ENCODE measurements at regions of chr21 and their contacts with region 1.

Region 1: GRCh38 chr21:24514081-24514733 is 1093.1 kb downstream of the MRPL39 start:
- DNase-seq: peak; percentile 27
- ATAC-seq: no peak; the same call in 1 of the 2 replicates
- H3K4me3 ChIP-seq: no peak overlapping the region
- H3K27ac ChIP-seq: no peak overlapping the region
- H3K4me1 ChIP-seq: no peaks in the 10 kb centered on the region
- H3K27me3 ChIP-seq: no peaks in the 10 kb centered on the region
- CTCF ChIP-seq: peak; percentile 73
- POLR2A ChIP-seq: no peak
- RAD21 ChIP-seq: peak; percentile 71

Region 2: GRCh38 chr21:23853796-23854379 is 660.3 kb before region 1 on chr21:
- CTCF ChIA-PET with region 1: no interaction called
- POLR2A ChIA-PET with region 1: no interaction called
- dilution Hi-C with region 1: no loop called
- in situ Hi-C with region 1: loop called (anchors 25 kb)
- intact Hi-C with region 1: loop called (anchors 2 kb)
- DNase-seq: peak; percentile 31
- ATAC-seq: peak; percentile 66
- H3K4me3 ChIP-seq: no peak overlapping the region
- H3K27ac ChIP-seq: no peak overlapping the region
- H3K4me1 ChIP-seq: no peaks in the 10 kb centered on the region
- H3K27me3 ChIP-seq: no peaks in the 10 kb centered on the region
- CTCF ChIP-seq: peak; percentile 51
- POLR2A ChIP-seq: no peak
- RAD21 ChIP-seq: peak; percentile 50

Region 3: DNA sequence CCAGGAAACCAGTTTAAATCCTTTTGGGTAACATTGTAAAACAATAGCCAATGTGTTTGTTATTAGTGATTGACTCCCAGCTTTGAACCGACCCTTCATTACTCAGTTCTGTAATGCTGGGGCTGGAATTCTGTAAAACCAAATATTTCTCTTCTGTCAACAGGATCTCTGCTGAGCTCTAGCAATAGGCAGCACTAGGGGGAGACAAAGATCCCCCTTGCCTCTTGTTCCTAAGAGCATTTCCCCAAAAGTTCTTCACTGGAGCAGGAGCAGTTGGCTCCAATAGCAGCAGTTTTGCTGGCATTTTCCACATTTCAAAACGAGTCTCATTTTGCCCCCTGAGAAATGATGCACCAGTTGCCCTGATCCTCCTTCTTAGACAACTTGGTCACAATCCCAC is 578.0 kb before region 1 on chr21:
- CTCF ChIA-PET with region 1: no interaction called
- POLR2A ChIA-PET with region 1: no interaction called
- dilution Hi-C with region 1: no loop called
- in situ Hi-C with region 1: no loop called
- intact Hi-C with region 1: loop called (anchors 1 kb)
- DNase-seq: peak; percentile 48
- ATAC-seq: peak; percentile 57
- H3K4me3 ChIP-seq: no peak overlapping the region
- H3K27ac ChIP-seq: no peak overlapping the region
- H3K4me1 ChIP-seq: no peaks in the 10 kb centered on the region
- H3K27me3 ChIP-seq: no peaks in the 10 kb centered on the region
- CTCF ChIP-seq: peak; percentile 61
- POLR2A ChIP-seq: no peak
- RAD21 ChIP-seq: peak; percentile 59

Region 4: DNA sequence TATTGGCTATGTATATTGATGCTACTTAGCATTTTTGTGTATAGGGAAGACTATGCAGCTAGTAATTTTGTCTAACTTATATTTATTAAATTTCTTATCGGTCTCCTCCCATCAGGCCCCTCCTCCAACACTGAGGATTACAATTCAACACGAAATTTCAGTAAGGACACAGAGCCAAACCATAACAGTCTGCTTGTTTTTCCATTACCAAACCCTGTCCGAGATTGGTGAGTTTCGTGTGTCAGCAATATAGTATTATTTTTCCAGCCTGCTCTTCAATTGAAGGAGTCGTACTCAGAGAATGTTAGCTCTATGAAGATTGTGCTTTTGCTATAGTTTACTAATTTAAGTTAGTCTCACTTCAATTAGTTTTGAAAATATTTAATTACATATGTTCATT is 402.2 kb before region 1 on chr21:
- CTCF ChIA-PET with region 1: no interaction called
- POLR2A ChIA-PET with region 1: no interaction called
- dilution Hi-C with region 1: no loop called
- in situ Hi-C with region 1: loop called (anchors 10 kb)
- intact Hi-C with region 1: loop called (anchors 2 kb)
- DNase-seq: peak; percentile 48
- ATAC-seq: peak; percentile 64
- H3K4me3 ChIP-seq: no peak overlapping the region
- H3K27ac ChIP-seq: no peak overlapping the region
- H3K4me1 ChIP-seq: 0 out of 2 replicates have a peak, but pooled peaks cover 2% of the 10 kb centered on the region
- H3K27me3 ChIP-seq: no peaks in the 10 kb centered on the region
- CTCF ChIP-seq: no peak
- POLR2A ChIP-seq: no peak
- RAD21 ChIP-seq: no peak

Region 5: DNA sequence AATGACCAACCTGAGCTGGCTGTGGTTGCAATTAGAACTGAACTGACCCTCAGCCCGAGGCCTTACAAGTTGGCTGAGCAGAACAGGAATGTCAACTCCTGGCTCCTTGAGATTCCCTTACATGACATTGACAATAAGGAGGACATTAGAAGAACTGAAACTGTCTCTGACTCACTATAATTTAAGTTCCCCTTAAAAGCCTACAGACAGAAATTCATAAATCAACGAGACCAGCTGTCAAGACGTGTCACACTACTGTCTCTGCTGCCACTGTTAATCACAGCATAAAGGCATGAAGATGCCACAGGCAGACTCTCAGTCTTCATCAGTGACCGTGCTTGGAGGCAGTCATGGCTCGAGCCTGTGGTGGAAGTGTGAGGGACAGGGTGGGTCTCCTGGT is 1389.4 kb after region 1 on chr21:
- CTCF ChIA-PET with region 1: no interaction called
- POLR2A ChIA-PET with region 1: no interaction called
- dilution Hi-C with region 1: no loop called
- in situ Hi-C with region 1: no loop called
- intact Hi-C with region 1: no loop called
- DNase-seq: no peak
- ATAC-seq: no peak
- H3K4me3 ChIP-seq: no peak overlapping the region
- H3K27ac ChIP-seq: no peak overlapping the region
- H3K4me1 ChIP-seq: peaks cover 3% of the 10 kb centered on the region
- H3K27me3 ChIP-seq: no peaks in the 10 kb centered on the region
- CTCF ChIP-seq: no peak
- POLR2A ChIP-seq: no peak
- RAD21 ChIP-seq: no peak